HAP-1 (cell line): ENCODE measurements at regions of chr9 and their contacts with region 1.

Region 1: GRCh38 chr9:113737517-113738271 is 138.4 kb upstream of the ZNF618 start:
- DNase-seq: peak; percentile 39 to 80
- H3K4me3 ChIP-seq: no peak overlapping the region
- H3K4me1 ChIP-seq: no peaks in the 10 kb centered on the region
- H3K27me3 ChIP-seq: peaks cover 6% of the 10 kb centered on the region; the same call in 1 of the 2 replicates

Region 2: DNA sequence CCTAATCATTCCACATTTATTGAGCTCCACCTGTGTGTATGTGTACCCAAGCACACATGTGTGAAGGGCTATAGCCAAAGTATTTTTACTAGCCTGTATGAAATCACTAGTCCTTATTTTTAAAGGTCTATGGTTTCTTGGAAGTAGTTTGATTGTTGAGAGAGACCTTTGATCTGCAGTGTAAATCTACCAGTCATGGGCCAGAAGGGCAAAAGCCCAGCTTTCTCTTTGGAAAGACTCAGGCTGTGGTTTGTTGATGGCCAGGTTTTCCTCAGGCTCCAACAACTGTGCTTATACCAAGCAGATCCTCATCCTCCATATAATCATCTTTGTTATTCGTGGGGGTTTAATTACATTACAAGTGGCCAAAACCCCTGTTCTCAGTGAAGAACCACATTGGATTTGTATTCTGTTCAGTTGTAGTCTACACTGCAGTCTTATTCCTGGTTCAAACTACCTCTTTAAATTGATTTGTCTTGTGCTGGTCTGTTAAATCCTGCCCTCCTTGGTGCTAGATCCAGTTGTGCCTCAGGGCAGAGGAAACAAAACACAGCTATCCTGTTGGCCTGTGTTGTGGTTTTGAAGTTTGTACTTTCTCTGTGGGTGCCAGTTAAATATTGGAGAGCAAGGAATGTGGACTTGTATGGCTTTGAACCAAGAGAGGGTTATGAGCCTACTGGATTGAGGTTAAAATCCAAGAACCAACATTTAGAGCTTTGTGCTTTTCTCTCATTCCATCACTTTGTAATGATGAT is 475.6 kb before region 1 on chr9:
- in situ Hi-C with region 1: no loop called
- DNase-seq: no peak
- H3K4me3 ChIP-seq: no peak overlapping the region
- H3K4me1 ChIP-seq: no peaks in the 10 kb centered on the region
- H3K27me3 ChIP-seq: no peaks in the 10 kb centered on the region

Region 3: DNA sequence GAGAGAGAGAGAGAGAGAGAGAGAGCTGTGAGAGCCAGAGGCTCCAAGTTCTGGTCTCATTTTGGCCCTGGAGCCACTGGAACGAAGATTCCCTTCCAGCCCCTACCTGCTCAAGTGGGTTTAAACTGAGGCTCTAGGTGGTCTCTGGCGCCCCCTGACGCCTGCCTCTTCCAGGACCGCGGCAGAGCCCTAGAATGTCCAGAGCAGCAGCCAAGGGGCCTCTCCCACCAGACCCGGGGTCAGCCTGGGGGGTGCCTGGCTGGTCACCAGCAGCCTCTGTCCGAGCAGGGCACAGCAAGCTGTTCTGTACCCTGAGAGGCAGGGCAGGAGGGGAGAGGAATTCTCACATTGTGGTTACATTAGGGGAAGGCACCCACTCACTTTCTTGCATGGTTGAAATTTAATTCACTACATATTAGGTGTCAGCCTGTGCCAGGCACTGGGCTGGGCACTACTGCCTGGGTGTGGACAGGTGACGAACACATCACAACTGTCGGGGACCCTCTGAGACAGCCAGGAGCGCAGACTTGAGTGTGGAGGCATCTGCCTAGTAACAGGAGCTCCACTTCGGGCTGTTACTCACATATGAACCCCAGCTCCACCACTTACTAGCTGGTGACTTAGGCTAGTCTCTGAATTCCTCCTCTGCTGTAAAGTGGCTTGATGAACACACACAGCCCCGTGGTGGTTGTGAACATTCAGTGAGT is 295.9 kb after region 1 on chr9:
- in situ Hi-C with region 1: loop called (anchors 25 kb)
- DNase-seq: peak; percentile 11 to 58
- H3K4me3 ChIP-seq: no peak overlapping the region
- H3K4me1 ChIP-seq: peaks cover 8% of the 10 kb centered on the region
- H3K27me3 ChIP-seq: no peaks in the 10 kb centered on the region

Region 4: GRCh38 chr9:114055061-114055460 is 317.4 kb after region 1 on chr9:
- in situ Hi-C with region 1: no loop called
- DNase-seq: no peak
- H3K4me3 ChIP-seq: no peak overlapping the region
- H3K4me1 ChIP-seq: no peaks in the 10 kb centered on the region
- H3K27me3 ChIP-seq: no peaks in the 10 kb centered on the region

Region 5: GRCh38 chr9:114291064-114291474 is 553.4 kb after region 1 on chr9:
- in situ Hi-C with region 1: loop called (anchors 25 kb)
- DNase-seq: peak; percentile 33 to 81
- H3K4me3 ChIP-seq: no peak overlapping the region
- H3K4me1 ChIP-seq: no peaks in the 10 kb centered on the region
- H3K27me3 ChIP-seq: no peaks in the 10 kb centered on the region; the same call in 1 of the 2 replicates